ENCODE measurements at regions of chr2 and their contacts with region 1.

Region 1: GRCh38 chr2:112726497-112727190 is 5.8 kb downstream of the NT5DC4 start:
- DNase-seq: peak; percentile 92
- H3K4me3 Mint-ChIP-seq: no peak overlapping the region
- H3K27ac Mint-ChIP-seq: no peak overlapping the region
- H3K4me1 Mint-ChIP-seq: peaks cover 19% of the 10 kb centered on the region
- H3K27me3 Mint-ChIP-seq: peaks cover 51% of the 10 kb centered on the region

Region 2: DNA sequence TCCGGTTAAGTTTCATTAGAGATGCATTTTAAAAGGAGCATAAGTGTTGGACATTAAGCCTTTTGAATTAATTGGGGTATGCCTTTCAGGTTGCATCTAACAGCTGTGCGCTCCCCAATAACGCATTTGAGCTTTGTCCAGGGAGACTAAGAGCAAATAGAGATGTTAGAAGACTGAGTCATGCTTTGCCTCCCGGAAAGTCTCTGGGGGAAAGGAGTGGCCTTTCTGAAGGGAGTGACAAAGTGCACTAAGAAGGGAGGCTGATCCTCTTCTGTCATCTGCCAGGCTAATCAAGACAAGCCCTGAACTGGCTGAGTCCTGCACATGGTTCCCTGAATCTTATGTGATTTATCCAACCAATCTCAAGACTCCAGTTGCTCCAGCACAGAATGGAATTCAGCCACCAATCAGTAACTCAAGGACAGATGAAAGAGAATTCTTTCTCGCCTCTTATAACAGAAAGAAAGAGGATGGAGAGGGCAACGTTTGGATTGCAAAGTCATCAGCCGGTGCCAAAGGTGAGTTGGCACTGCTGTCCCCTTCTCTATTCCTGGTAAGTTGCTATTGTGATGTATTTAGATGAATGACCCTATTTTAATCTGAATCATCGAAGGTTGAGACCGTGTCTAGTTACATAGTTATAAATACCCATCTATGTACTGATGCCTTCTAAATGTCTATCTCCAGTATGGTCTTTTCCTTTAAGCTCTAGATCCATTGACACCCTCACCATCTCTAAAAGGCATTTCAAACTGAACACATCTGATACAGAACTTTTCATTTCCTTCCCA is 232.6 kb before region 1 on chr2:
- CTCF ChIA-PET with region 1: no interaction called
- DNase-seq: no peak
- H3K4me3 Mint-ChIP-seq: no peak overlapping the region
- H3K27ac Mint-ChIP-seq: no peak overlapping the region
- H3K4me1 Mint-ChIP-seq: peaks cover 3% of the 10 kb centered on the region
- H3K27me3 Mint-ChIP-seq: no peaks in the 10 kb centered on the region

Region 3: DNA sequence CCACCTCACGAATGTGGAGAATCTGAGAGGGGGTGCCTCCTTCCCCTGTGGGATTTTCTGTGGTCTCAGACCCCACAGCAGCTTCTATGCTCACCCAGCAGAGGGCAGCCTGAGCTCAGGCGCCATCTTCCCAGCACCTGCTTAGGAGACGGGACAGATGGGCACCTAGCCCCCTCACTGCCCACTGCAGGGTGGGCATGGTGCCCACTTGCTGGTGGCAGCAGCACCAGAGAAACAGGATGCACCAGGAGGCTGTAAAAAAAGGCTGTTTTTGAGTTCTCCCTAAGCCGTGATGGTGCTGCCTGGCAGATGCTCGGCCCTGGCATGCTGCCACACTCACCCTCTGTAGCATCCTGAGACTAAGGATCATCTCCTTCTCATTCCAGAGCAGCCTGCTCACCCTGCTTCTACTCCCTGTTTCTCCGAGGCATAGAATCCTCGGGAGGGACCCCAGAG is 100.0 kb before region 1 on chr2:
- CTCF ChIA-PET with region 1: interaction called, 193 read pairs
- DNase-seq: peak; percentile 74
- H3K4me3 Mint-ChIP-seq: peak overlapping the region; percentile 49
- H3K27ac Mint-ChIP-seq: peak overlapping the region; percentile 96
- H3K4me1 Mint-ChIP-seq: peaks cover 87% of the 10 kb centered on the region
- H3K27me3 Mint-ChIP-seq: peaks cover 5% of the 10 kb centered on the region

Region 4: GRCh38 chr2:112658820-112659667 is 67.6 kb before region 1 on chr2:
- CTCF ChIA-PET with region 1: interaction called, 11 read pairs
- DNase-seq: no peak
- H3K4me3 Mint-ChIP-seq: no peak overlapping the region
- H3K27ac Mint-ChIP-seq: peak overlapping the region; percentile 42
- H3K4me1 Mint-ChIP-seq: peaks cover 59% of the 10 kb centered on the region
- H3K27me3 Mint-ChIP-seq: no peaks in the 10 kb centered on the region

Region 5: GRCh38 chr2:112737542-112738232 is 11.0 kb after region 1 on chr2:
- CTCF ChIA-PET with region 1: interaction called, 16 read pairs
- DNase-seq: no peak
- H3K4me3 Mint-ChIP-seq: no peak overlapping the region
- H3K27ac Mint-ChIP-seq: no peak overlapping the region
- H3K4me1 Mint-ChIP-seq: no peaks in the 10 kb centered on the region
- H3K27me3 Mint-ChIP-seq: no peaks in the 10 kb centered on the region

Region 6: GRCh38 chr2:112768432-112768831 is 41.8 kb after region 1 on chr2:
- CTCF ChIA-PET with region 1: no interaction called
- DNase-seq: no peak
- H3K4me3 Mint-ChIP-seq: no peak overlapping the region
- H3K27ac Mint-ChIP-seq: peak overlapping the region; percentile 62
- H3K4me1 Mint-ChIP-seq: peaks cover 42% of the 10 kb centered on the region
- H3K27me3 Mint-ChIP-seq: peaks cover 4% of the 10 kb centered on the region

Region 7: DNA sequence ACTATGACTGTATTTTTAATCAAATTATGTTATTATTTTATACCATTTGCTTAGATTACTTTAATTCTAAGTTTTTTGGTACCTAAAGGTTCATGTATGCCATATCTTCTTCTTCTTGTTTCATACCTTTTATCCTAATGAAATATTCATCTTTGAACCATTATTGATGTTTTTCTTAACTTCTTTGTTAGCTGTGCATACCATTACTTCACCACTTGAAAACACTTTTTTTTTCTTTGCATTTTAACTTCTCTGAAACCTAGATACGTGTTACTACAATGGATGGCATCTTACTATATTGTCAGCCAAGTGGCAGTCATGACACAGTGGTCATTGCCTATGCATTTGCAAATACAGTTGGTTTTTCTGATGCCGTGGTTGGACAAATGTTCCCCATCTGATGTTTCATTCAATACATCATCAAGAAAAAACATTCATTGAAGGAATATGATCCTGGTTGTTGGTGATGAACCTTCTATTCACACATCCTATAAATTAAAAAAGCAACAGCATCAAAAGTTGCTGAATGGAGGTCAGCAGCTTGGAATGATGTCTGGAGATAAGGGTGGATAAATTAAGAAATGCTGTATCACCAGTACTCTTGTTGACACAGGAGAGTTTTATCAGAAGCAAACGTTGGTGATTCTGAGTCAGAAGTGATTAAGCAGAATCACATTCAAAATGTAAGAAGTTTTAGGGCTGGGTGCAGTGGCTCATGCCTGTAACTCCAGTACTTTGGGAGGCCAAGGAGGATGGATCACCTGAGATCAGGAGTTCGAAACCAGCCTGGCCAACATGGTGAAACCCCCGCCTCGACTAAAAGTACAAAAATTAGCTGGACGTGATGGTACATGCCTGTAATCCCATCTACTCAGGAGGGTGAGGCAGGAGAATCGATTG is 286.0 kb after region 1 on chr2:
- CTCF ChIA-PET with region 1: no interaction called
- DNase-seq: no peak
- H3K4me3 Mint-ChIP-seq: no peak overlapping the region
- H3K27ac Mint-ChIP-seq: no peak overlapping the region
- H3K4me1 Mint-ChIP-seq: peaks cover 13% of the 10 kb centered on the region
- H3K27me3 Mint-ChIP-seq: peaks cover 10% of the 10 kb centered on the region

Measured in activated naive CD4-positive, alpha-beta T cell treated with anti-CD3 and anti-CD28 coated beads, Interleukin-2, amount 10 ng/mL, durations not matched to agents 7 days and 5 days (primary cell).